Activated T-helper 1 cell treated with anti-CD3 and anti-CD28 coated beads, Interleukin-12 subunit alpha, Interleukin-12 subunit beta, Interleukin-2, Interleukin-4 antibody, amounts not matched to agents 30 ng/mL and 10 ng/mL and 1 ng/mL, durations not matched to agents 14 hours and 24 hours and 36 hours (primary cell): ENCODE measurements at regions of chr20 and their contacts with region 1.

Region 1: DNA sequence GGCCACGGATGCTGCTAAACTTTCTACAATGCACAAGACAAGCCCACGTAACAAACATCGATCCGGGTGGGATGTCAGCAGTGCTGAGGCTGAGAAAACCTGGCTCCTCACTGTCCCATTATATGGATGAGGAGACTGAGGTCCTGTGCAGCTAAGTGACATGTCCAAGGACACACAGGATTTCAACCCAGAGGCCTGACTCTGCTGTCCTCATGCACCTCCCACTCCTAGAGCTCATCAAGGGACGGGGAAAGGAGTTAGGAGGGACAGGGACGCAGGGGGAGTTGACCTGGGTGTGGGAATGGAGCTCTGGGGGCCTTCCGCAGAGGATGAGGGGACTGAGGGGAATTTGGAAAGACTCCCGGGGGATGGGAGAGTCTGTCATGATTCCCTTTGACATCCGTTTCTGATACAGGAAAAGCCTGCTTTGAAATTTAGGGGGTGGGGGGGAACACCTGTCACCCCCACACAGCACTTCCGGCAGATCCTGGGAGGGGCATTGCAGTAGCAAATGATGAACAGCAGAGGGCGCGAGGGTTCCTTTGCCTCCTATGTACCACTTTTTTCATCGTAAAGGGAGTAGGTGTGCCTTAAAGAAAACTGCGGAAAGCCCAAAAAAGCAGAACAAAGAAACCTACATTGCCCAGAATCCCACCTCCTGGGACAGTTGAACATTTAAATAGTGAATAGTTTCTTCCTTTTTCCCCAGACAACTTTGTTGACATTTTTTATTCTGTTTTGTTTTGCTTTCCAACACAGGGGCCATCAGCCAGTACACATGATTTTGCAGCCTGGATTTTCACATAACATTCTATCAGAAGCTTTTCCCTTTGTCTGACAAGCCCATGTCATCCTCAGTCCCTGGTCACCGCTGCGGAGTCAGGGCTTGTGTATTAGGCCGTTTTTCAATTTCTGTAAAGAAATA is 48.6 kb downstream of the SLC2A10 start:
- DNase-seq: peak; percentile 37
- H3K4me3 Mint-ChIP-seq: no peak overlapping the region
- H3K27ac Mint-ChIP-seq: no peak overlapping the region
- H3K4me1 Mint-ChIP-seq: no peaks in the 10 kb centered on the region
- H3K27me3 Mint-ChIP-seq: peaks cover 8% of the 10 kb centered on the region

Region 2: DNA sequence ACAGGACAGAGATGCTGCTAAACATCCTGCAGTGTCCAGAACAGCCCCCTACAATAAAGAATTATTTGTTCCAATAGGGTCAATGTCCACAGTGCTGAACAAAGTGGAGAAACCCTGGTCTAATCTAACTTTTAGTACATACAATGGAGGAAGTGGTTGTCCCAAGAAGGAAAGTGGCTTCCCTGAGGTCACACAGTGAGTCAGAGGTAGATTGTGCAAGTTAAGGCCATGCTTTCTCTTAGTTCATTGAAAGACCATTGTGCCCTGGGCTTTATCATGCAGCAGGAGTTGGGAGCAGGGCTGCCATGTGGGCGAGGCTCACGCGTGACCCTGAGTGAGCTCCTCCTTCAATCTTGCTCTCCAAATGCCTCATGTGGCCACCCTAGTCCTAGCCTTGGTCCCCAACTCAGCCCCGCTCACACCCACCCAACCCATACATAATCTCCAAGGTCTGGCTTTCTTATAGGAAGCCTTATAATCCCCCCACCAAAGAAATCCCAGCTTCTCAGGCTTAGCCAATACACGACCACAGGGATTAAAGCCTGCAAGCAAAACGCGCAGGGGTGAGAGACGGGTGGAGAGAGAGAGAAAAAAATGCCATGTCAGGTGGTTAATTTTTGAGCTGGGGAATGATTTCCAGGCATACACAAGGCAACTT is 126.7 kb before region 1 on chr20:
- intact Hi-C with region 1: no loop called
- DNase-seq: no peak
- H3K4me3 Mint-ChIP-seq: no peak overlapping the region
- H3K27ac Mint-ChIP-seq: no peak overlapping the region
- H3K4me1 Mint-ChIP-seq: peaks cover 7% of the 10 kb centered on the region
- H3K27me3 Mint-ChIP-seq: peaks cover 23% of the 10 kb centered on the region

Region 3: GRCh38 chr20:47019121-47019824 is 261.3 kb after region 1 on chr20:
- intact Hi-C with region 1: loop called (anchors 10 kb)
- DNase-seq: no peak
- H3K4me3 Mint-ChIP-seq: no peak overlapping the region
- H3K27ac Mint-ChIP-seq: no peak overlapping the region
- H3K4me1 Mint-ChIP-seq: no peaks in the 10 kb centered on the region
- H3K27me3 Mint-ChIP-seq: peaks cover 32% of the 10 kb centered on the region

Region 4: GRCh38 chr20:47150403-47151152 is 392.6 kb after region 1 on chr20:
- intact Hi-C with region 1: loop called (anchors 2 kb)
- DNase-seq: no peak
- H3K4me3 Mint-ChIP-seq: no peak overlapping the region
- H3K27ac Mint-ChIP-seq: no peak overlapping the region
- H3K4me1 Mint-ChIP-seq: no peaks in the 10 kb centered on the region
- H3K27me3 Mint-ChIP-seq: peaks cover 9% of the 10 kb centered on the region